ENCODE measurements at regions of chr16 and their contacts with region 1.

Region 1: DNA sequence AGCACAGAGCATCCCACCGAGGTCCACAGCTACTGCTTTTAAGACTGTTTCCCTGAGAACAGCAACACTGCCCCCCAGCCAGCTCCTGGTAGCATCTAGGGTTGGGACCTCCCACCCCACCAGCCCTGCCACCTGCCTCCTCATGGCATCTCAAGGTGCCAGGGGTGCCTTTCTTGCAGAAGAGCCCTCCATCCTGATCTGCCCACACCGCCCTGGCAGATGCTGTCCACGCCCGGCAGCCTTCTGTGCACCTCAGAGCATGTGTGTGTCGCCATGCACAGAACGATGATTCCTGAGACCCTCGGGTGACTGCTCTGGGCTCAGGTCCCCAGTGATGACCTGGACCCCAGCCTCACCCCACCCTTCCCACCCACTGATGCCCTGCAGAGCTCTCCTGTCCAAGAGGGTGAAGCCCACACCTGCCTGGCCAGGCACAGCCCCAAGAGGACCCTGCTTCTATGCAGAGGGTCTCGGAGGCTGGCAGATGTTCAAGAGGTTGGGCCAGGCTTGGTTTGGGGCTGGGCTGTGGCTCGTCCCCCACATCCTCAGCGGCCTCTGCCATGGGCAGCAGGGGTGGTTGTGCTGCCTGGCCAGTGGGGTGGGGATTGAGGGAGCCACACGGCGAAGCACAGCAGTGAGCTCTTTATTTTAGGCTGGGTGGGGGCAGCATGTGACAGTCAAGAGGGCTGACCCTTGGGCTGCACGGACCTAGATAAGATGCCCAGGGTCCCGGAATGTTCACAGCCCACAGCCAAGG is 5.2 kb upstream of the SPATA2L start:
- DNase-seq: no peak

Region 2: DNA sequence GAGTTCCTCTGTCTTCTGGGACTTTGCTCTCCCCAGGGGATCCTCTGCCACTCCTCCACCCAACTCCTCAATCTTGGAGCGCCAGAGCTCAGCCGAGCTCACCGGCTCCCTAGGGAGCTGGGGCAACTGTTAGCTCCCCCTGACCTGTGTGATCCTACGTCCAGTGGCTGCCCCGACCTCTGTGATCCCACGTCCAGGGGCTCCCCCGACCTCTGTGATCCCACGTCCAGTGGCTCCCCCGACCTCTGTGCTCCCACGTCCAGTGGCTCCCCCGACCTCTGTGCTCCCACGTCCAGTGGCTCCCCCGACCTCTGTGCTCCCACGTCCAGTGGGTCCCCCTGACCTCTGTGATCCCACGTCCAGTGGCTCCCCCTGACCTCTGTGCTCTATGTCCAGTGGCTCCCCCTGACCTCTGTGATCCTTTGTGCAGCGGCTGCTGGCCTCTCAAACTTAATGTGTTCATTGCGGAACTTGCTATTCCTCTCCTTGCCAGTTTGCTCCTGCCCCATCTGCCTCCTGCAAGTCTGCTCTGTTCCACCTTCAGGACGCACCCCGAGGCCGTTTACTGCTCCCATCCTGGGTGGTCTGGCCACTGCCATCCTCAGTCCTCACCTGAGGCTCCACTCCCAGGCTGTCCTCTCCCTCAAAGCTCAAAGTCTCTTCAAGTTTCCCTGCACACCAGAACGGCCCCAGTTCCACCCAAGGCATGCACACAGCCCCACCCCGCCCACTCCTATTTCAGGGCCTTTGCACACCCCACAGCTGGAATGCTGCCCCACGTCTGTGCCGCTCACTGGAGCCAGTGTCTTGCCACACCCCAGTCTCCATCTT is 11.2 kb after region 1 on chr16:
- CTCF ChIA-PET with region 1: interaction called, 7 read pairs
- POLR2A ChIA-PET with region 1: interaction called, 14 read pairs
- DNase-seq: no peak

Region 3: DNA sequence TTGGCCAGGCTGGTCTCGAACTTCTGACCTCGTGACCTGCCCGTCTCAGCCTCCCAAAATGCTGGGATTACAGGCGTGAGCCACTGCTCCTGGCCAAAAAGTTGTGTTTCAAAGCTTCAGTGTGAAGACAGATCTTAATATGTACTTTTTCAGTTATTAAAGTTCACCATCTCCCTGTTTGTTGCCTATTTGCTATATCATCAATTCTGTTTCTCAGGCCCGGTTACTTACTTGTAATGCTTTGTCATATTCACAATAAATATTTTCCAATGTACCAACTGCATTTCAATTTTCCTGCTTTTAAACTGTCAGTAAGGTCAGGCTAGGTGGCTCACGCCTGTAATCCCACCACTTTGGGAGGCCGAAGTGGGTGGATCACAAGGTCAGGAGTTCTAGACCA is 87.3 kb after region 1 on chr16:
- CTCF ChIA-PET with region 1: interaction called, 10 read pairs
- POLR2A ChIA-PET with region 1: no interaction called
- DNase-seq: no peak